Left ventricle myocardium superior (tissue), 1 donor: ENCODE measurements at regions of chr1 and their contacts with region 1.

Region 1: DNA sequence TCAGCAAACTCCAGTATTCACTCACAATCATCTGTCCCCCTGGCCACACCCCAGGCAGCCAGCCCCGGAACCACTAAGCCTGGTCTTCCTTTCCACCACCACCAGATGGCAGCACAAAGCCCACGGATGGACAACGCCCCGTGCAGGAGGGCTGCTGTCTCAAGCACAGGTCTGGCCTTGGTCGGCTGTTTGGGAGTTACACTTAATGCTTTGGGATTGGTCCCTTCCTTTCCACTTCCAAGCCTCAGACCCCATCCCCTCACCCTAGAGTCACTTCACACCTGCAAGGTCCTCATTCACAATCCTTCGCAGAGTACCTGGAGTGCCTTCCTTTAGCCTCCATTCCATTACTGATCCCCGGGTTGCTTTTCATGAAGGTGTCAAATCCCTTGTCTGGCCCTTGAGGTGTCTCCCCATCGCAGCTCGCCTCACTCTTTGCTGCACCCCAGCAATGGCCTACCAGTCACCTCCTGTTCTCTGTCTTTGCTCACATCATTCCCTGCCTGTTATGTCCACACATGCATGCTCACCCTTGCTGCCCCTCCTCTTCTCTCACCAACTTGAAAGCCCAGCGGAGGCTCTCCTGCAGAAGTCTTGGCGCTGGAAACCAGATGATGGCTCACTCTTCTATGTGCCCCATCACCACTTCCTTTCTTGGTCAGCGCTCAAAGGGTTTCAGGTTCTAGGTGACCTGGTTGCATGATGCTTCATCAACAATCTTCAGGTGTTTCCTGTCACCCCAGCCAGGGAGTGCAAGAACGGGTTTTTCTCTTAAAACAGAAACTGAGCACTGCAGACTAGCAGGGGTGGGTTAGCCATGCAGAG is 24.9 kb upstream of the KCNA2 start:
- DNase-seq: peak; percentile 80
- ATAC-seq: peak; percentile 42

Region 2: GRCh38 chr1:110495926-110496600 is 135.0 kb before region 1 on chr1:
- intact Hi-C with region 1: no loop called
- DNase-seq: peak; percentile 71
- ATAC-seq: peak; percentile 87

Region 3: DNA sequence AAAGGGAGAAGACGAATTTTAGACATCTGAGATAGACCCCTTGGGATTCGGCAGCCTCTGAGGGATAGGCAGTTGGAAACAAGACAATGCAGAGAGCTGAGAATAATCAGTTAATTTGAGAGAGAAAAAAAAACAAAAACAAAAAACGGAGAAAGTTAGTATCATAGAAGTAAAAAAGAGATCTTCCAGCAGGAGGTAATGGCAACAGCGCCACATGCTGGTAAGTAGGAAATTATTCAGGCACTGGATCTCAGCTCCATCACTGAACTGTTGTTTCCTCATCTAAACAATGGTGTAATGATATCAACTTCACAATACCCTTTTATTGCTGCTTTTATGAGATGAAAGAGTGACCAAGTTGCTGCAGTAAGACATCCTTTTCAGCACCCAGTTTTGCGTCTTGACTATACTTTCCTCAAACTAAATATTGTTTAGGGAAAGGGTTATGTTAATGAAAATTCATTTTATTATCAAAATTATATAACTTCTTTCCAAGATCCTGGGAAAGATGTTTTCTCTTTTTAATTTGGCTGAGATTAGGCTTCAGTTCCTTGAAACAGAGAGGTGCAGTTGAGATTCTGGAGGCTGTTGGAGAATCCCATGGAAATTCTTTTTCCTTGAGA is 135.1 kb after region 1 on chr1:
- intact Hi-C with region 1: loop called (anchors 5 kb)
- DNase-seq: no peak
- ATAC-seq: peak; percentile 68

Region 4: DNA sequence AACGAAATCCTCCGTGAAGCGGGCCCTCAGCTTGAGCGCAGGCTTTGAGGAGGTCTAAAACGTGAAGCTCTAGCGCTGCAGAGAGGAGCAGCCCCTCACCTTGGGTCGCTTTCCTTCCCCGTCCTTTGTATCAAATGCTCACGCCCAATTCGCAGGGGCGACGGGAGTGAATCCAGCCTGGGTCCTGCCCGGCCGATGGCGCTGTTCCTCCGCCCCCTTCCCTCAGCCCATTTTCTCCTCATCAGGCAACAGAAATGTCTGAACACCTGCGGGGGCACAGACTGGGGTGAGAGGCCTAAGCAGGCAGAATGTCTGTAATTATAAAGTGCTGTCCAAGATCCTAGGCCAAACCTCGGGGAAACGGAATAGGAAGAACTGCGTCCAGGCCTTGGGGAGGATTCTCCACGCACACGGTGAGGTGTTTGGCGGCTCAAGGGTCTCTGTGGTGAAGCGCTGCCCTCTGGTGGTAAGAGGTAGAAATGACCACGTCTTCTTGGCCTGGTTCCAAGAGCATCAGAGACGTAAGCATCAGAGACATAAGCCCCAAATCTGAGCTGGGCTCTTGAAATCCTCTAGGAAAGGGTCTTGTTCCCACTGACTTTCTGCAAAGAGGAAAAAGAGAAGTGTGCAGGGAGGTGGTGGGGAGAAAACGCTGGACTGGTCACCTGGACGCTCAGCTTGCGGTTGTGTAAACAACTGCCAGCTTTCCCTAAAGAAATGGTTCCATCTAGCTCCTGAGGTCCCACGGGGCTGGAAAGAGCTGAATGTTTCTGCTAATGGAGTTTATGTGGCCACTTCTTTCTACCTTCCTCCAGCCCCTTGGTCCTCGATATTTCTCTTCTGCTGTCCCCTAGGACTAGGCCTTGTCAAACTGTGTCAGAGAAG is 149.8 kb after region 1 on chr1:
- intact Hi-C with region 1: loop called (anchors 5 kb)
- DNase-seq: peak; percentile 51
- ATAC-seq: peak; percentile 65